ENCODE measurements at regions of chr1 and their contacts with region 1.

Region 1: GRCh38 chr1:212791676-212792395 is at the starts of genes NSL1 and TATDN3:
- DNase-seq: peak; percentile 90
- ATAC-seq: peak; percentile 83
- H3K4me3 ChIP-seq: peak within 1 kb of the TSS; percentile 78
- H3K27ac ChIP-seq: peak within 1 kb of the TSS; percentile 97
- H3K4me1 ChIP-seq: peaks cover 8% of the 10 kb centered on the region
- H3K27me3 ChIP-seq: no peaks in the 10 kb centered on the region
- CTCF ChIP-seq: no peak
- EP300 ChIP-seq: no peak
- POLR2A ChIP-seq: peak; percentile 99
- RAD21 ChIP-seq: no peak
- polyA plus RNA-seq, gene NSL1: 46.5 to 67.2 TPM
- polyA plus RNA-seq, gene TATDN3: 34.0 to 40.0 TPM

Region 2: DNA sequence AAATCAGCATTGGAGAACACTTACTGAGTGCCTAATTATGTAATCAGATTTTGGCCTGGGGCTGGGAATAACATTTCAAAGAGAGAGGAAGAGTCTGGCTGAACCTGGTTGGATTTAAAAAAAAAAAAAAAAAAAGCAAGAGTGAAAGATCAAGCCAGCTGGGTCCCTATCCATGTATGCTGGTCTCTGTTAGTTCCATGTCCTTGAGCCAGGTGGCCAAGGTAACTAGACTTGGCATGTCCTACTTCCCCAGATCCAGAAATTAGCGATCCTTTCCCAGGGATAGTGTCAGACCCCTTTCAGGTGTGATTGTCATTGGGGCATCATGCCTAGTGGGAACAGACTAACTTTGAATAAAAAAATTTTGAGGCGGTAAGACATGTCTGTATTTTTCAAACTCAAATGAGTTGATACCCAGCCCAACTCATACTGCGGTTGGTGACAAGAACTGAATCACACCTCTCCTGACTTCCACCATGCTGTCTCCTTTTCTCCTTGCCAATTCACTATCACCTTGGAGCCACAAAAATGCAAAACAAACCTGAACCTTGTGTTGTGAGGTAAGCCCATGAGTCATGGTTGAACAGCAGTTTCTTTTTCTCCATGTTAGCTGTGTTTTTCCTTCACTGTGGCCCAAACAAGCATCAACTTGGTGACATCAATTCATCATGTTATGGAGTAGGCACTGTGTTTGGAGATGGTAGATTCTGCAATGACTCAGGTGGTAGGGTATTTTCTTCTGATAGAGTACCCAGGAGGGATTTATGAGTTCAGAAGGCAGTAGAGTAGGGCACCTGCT is 531.1 kb before region 1 on chr1:
- CTCF ChIA-PET with region 1: no interaction called
- POLR2A ChIA-PET with region 1: no interaction called
- RAD21 ChIA-PET with region 1: no interaction called
- SMC1A ChIA-PET with region 1: no interaction called
- in situ Hi-C with region 1: no loop called
- intact Hi-C with region 1: no loop called
- DNase-seq: no peak
- ATAC-seq: no peak
- H3K4me3 ChIP-seq: no peak overlapping the region
- H3K27ac ChIP-seq: no peak overlapping the region
- H3K4me1 ChIP-seq: peaks cover 10% of the 10 kb centered on the region
- H3K27me3 ChIP-seq: no peaks in the 10 kb centered on the region
- CTCF ChIP-seq: no peak
- EP300 ChIP-seq: no peak
- POLR2A ChIP-seq: no peak
- RAD21 ChIP-seq: no peak

Region 3: DNA sequence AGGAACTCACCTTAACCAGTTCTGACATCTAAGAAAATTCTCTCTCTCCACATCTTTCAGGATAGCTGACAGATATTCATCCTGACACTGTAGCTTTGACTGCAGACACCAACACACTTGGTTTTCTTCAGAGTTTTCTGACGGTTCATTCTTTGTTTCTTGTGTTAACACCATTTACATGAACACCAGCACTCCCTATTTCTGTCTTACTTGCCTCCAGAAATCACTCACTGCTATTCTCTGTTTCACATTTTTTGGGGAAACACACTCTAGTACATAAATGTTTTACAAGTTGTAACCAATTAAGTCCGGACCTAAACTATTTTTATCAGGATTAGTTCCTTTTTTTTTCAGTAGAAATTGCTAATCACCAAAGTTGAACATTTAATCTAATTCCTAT is 81.7 kb after region 1 on chr1:
- CTCF ChIA-PET with region 1: interaction called, 4 read pairs
- POLR2A ChIA-PET with region 1: no interaction called
- RAD21 ChIA-PET with region 1: interaction called, 7 read pairs
- SMC1A ChIA-PET with region 1: interaction called, 6 read pairs
- in situ Hi-C with region 1: no loop called
- intact Hi-C with region 1: loop called (anchors 1 kb)
- DNase-seq: peak; percentile 77
- ATAC-seq: peak; percentile 82
- H3K4me3 ChIP-seq: peak overlapping the region; percentile 8; the same call in 1 of the 2 replicates
- H3K27ac ChIP-seq: peak overlapping the region; percentile 46
- H3K4me1 ChIP-seq: peaks cover 11% of the 10 kb centered on the region
- H3K27me3 ChIP-seq: no peaks in the 10 kb centered on the region
- CTCF ChIP-seq: no peak
- EP300 ChIP-seq: peak; percentile 57 to 77; a peak in 3 of 4 replicates
- POLR2A ChIP-seq: no peak
- RAD21 ChIP-seq: no peak

Region 4: GRCh38 chr1:212899845-212900244 is 108.0 kb after region 1 on chr1:
- CTCF ChIA-PET with region 1: no interaction called
- POLR2A ChIA-PET with region 1: no interaction called
- RAD21 ChIA-PET with region 1: no interaction called
- SMC1A ChIA-PET with region 1: no interaction called
- in situ Hi-C with region 1: no loop called
- intact Hi-C with region 1: no loop called
- DNase-seq: no peak
- ATAC-seq: no peak
- H3K4me3 ChIP-seq: no peak overlapping the region
- H3K27ac ChIP-seq: no peak overlapping the region
- H3K4me1 ChIP-seq: no peaks in the 10 kb centered on the region
- H3K27me3 ChIP-seq: no peaks in the 10 kb centered on the region
- CTCF ChIP-seq: no peak
- EP300 ChIP-seq: no peak
- POLR2A ChIP-seq: no peak
- RAD21 ChIP-seq: no peak